Left lung (tissue), 14 donors: ENCODE measurements at regions of chr15 and their contacts with region 1.

Region 1: DNA sequence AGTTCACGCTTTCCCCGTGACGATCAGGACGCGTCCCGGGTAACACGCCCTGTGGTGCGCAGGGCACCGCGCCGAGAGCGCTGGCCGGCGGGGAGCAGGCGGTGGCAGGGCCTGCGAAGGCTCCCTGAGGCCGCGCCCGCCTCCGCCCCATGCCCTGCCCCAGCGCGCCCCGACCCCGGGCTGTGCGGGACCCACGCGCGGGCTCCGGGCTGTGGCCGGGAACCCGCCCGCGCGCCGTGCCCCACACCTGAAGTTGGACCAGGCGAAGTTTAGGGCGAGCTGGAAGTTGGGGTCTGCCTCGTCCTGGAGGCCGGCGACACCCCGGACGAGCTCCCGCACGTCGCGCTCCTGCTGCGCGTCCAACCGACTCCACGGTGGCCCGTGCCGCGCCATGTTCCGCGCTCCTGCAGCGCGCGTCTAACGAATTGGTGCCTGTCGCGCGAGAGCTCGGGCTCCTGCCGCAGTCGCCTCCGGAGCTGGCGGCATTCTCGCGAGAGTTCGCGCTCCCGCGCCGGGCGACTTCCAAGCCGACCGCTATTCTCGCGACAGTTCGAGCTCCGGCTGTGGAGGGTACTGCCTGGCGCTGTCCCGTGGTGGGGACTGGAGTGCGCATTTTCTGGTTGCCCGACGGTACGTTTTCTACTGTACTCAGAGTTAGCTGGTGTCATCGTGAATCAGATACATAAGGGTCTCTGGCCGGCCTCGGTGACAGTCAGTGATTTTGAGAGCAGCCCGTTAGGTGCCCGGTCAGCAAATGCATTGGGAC is at the start of gene TUBGCP5:
- DNase-seq: peak; percentile 97 to 99 (median 98)
- ATAC-seq: peak; percentile 96
- H3K4me3 ChIP-seq: peak within 1 kb of the TSS; percentile 51 to 71
- H3K27ac ChIP-seq: peak within 1 kb of the TSS; percentile 84 to 89
- H3K4me1 ChIP-seq: peaks cover 8 to 13% of the 10 kb centered on the region in 2 donors
- H3K27me3 ChIP-seq: no peaks in the 10 kb centered on the region
- CTCF ChIP-seq: peak; percentile 36 to 77
- polyA plus RNA-seq, gene TUBGCP5: 31.7 to 41.4 (median 33.1) TPM

Region 2: GRCh38 chr15:22918056-22918455 is 121.3 kb before region 1 on chr15:
- intact Hi-C with region 1: no loop called
- DNase-seq: no peak
- ATAC-seq: no peak
- H3K4me3 ChIP-seq: no peak overlapping the region
- H3K27ac ChIP-seq: no peak overlapping the region
- H3K4me1 ChIP-seq: no peaks in the 10 kb centered on the region
- H3K27me3 ChIP-seq: no peaks in the 10 kb centered on the region
- CTCF ChIP-seq: no peak

Region 3: DNA sequence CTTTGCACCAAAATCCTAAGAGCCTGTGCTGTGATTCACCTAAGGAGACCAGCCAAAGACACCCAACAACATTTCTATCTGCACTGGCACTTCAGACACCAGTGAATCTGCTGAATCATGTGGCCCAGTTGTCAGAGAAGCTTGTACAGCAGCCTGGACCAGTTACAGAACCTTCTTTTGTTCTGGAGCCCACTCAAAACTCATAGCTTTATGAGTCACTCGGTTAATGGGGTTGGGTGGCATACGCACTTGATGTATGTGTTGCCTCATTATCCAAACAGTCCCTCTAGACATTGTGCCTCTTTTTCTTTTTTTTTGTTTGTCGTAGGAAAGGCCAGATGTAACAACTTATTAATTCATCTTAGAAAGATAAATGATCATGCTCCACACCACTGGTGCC is 433.3 kb after region 1 on chr15:
- intact Hi-C with region 1: loop called in 1 of 2 experiments (anchors 10 kb)
- DNase-seq: no peak
- ATAC-seq: no peak
- H3K4me3 ChIP-seq: no peak overlapping the region
- H3K27ac ChIP-seq: no peak overlapping the region
- H3K4me1 ChIP-seq: no peaks in the 10 kb centered on the region
- H3K27me3 ChIP-seq: no peaks in the 10 kb centered on the region
- CTCF ChIP-seq: no peak